Activated CD8-positive, alpha-beta memory T cell treated with anti-CD3 and anti-CD28 coated beads, Interleukin-2, amount 10 ng/mL, durations not matched to agents 7 days and 5 days (primary cell): ENCODE measurements at regions of chr19 and their contacts with region 1.

Region 1: DNA sequence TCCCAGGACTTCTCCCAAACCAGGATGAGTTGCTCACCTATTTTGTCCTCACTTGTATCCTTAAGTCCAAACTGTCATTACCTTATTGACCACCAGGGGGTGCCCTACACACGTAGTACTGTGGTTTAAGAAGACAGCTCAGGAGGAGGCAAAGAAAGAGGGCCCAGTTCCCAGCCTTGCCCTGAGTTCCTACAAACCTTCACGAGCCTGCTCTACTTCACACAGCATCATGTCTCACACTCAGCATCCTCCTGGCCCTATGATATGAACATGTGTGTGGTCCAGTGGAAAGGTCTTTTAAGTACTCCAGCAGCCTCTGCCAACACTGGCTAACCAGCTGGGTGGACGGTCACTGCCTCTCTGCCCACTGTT is 8.1 kb upstream of the ZNF784 start:
- DNase-seq: peak; percentile 95
- ATAC-seq: peak; percentile 43
- H3K4me3 Mint-ChIP-seq: no peak overlapping the region
- H3K27ac Mint-ChIP-seq: peak overlapping the region; percentile 38
- H3K4me1 Mint-ChIP-seq: peaks cover 46% of the 10 kb centered on the region
- H3K27me3 Mint-ChIP-seq: peaks cover 4% of the 10 kb centered on the region

Region 2: DNA sequence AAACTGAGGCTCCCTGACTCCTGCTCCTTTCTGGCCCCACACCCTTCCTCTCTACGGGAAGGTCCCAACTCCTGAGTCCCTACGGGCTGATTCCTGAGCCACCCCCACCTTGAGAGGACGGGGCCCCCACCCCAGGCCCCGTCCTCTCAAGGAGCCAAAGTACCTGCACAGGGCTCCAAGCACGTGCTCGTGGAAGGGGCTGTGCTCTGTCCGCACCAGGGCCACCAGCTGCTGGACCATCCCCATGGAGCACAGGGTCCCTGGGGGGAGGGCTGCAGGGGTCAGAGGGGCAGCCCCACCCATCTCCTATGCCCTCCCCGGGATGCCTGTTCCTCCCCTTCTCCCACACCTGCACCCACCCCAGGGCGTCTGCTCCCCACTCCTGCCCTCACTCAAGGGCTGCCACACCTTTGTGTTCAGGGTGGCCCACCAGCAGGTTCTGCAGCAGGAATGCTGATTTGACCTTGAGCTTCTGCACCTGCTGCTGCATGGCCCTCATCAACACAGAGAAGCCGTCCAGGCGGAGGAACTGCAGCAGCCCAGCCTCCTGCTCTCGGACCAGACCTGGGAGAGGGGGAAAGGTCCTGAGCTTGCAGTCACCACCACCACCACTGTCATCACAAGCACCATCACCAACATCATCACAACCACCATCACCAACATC is 366.6 kb before region 1 on chr19:
- CTCF ChIA-PET with region 1: no interaction called
- DNase-seq: no peak
- ATAC-seq: no peak
- H3K4me3 Mint-ChIP-seq: no peak overlapping the region
- H3K27ac Mint-ChIP-seq: peak overlapping the region; percentile 57
- H3K4me1 Mint-ChIP-seq: peaks cover 18% of the 10 kb centered on the region
- H3K27me3 Mint-ChIP-seq: no peaks in the 10 kb centered on the region

Region 3: GRCh38 chr19:55452749-55453346 is 179.6 kb before region 1 on chr19:
- CTCF ChIA-PET with region 1: no interaction called
- DNase-seq: peak; percentile 59
- ATAC-seq: peak; percentile 53
- H3K4me3 Mint-ChIP-seq: no peak overlapping the region
- H3K27ac Mint-ChIP-seq: no peak overlapping the region
- H3K4me1 Mint-ChIP-seq: peaks cover 6% of the 10 kb centered on the region
- H3K27me3 Mint-ChIP-seq: peaks cover 23% of the 10 kb centered on the region

Region 4: DNA sequence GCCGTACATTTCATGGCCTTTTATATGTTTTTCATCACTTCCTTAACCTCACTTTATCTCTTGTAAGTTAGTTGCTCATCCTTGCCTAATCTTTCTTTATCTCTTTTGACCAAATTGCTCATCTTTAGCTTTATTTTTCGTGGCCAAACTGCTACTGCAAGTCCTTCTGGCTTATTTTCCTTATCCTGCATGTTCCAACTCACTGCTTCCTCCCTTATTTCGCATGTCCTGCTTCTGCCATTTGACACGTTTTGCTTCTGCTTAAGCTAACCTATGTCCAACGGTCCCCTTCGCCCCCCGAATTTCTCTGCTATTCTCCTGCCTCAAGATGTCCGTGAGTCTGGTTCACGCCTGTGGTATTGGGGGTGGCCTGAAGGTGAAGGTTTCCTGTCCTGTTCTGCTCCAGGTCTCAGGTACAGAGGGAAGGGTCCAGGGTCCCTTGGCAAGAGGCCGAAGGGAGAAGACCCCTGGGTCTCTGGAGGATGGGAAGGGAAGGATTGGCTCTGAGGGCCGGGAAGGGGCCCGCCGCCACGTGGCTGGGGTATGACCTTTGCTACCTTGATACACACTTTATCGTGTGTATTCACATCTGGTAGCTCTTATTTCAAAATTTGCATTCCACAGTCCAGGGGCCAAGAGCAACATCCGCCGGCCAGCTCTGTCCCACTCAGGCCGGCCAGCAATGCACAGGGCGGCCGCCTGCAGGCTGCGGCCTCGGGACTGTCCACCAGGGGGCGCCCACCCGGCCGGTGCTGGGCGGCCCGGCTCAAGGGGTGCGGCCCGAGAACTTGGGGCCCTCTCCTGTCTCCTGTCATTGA is 165.0 kb before region 1 on chr19:
- CTCF ChIA-PET with region 1: interaction called, 15 read pairs
- DNase-seq: peak; percentile 74
- ATAC-seq: peak; percentile 96
- H3K4me3 Mint-ChIP-seq: no peak overlapping the region
- H3K27ac Mint-ChIP-seq: no peak overlapping the region
- H3K4me1 Mint-ChIP-seq: peaks cover 3% of the 10 kb centered on the region
- H3K27me3 Mint-ChIP-seq: peaks cover 2% of the 10 kb centered on the region

Region 5: DNA sequence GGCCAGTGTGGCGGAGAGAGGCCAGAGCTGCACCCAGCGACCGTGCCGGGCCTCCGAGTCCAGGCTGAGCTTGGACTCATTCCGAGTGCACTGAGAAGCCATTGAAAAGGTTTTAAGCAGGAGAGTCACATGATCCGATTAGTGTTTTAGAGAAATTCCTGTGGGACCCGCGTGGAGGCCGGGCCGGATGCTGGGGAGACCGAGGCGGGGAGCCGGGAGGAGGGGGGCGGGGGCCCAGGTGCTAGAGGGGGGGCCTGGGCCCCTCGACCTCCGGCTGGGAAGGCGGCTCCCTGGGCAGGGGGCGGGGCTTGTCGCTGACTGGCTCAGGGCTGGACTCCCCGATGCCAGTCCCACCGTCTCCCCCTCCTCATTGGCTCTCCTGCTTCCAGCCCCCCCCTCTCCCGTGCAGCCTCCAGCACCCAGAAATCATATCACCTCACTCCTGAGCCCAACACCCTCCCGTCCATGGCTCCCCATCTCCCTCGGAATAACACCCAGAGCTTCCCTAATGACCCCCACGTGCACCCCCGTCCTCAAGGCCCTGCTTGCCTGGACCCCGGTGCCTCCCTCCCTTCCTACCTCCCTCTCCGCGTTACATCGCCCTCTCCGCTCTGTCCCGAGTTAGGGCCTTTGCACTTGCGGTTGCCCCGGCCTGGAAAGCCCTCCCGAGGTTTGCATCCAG is 46.6 kb before region 1 on chr19:
- CTCF ChIA-PET with region 1: interaction called, 11 read pairs
- DNase-seq: no peak
- ATAC-seq: no peak
- H3K4me3 Mint-ChIP-seq: no peak overlapping the region
- H3K27ac Mint-ChIP-seq: no peak overlapping the region
- H3K4me1 Mint-ChIP-seq: peaks cover 24% of the 10 kb centered on the region
- H3K27me3 Mint-ChIP-seq: peaks cover 23% of the 10 kb centered on the region

Region 6: DNA sequence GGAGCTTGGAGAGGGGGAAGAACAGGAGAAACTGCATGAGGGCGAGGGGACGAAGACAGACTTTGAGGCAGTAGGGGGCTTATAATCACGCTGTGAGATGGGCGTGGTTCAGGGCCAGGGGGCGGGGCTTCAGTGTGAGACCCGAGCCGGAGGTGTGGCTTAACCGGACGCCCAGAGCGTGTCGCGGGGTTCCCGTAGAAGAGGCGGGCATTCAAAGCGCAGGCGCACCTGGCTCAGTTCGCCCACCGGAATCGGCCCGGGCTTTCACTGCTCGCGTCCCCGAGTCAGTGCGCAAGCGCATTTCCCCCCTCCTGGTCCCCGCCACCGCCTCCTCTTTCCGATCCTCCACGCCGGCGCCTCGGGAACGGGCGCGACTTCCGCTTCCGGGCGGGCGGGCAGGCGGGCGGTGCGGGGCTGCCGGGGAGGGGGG is 27.2 kb before region 1 on chr19:
- CTCF ChIA-PET with region 1: interaction called, 44 read pairs
- DNase-seq: peak; percentile 99
- ATAC-seq: peak; percentile 86
- H3K4me3 Mint-ChIP-seq: peak overlapping the region; percentile 81
- H3K27ac Mint-ChIP-seq: peak overlapping the region; percentile 92
- H3K4me1 Mint-ChIP-seq: peaks cover 50% of the 10 kb centered on the region
- H3K27me3 Mint-ChIP-seq: no peaks in the 10 kb centered on the region

Region 7: GRCh38 chr19:55653758-55654539 is 21.5 kb after region 1 on chr19:
- CTCF ChIA-PET with region 1: interaction called, 104 read pairs
- DNase-seq: peak; percentile 100
- ATAC-seq: peak; percentile 81
- H3K4me3 Mint-ChIP-seq: peak overlapping the region; percentile 88
- H3K27ac Mint-ChIP-seq: peak overlapping the region; percentile 95
- H3K4me1 Mint-ChIP-seq: peaks cover 35% of the 10 kb centered on the region
- H3K27me3 Mint-ChIP-seq: no peaks in the 10 kb centered on the region

Region 8: GRCh38 chr19:55809381-55810058 is 177.1 kb after region 1 on chr19:
- CTCF ChIA-PET with region 1: interaction called, 13 read pairs
- DNase-seq: peak; percentile 53
- ATAC-seq: peak; percentile 60
- H3K4me3 Mint-ChIP-seq: no peak overlapping the region
- H3K27ac Mint-ChIP-seq: no peak overlapping the region
- H3K4me1 Mint-ChIP-seq: peaks cover 5% of the 10 kb centered on the region
- H3K27me3 Mint-ChIP-seq: no peaks in the 10 kb centered on the region